ENCODE measurements at regions of chr2 and their contacts with region 1.

Region 1: DNA sequence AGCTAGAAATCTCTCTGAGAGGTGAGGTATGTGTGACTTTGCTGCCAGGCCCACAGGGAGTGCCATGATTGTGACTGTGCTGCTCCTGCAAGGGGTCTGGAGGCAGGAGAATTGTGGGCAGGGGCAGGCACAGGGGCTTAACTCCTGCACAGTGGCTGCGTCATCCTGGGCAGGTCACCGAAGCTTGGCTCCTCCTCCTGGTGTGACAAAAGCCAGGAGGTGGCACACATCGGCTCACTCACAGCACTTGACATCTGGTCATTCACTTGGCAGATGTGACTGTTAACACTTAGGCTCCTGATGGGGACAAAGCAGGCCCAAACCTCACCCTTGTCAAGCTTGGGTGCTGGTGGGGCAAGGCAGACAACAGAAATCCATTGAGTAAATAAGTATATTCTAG is 36.4 kb upstream of the GLI2 start:
- DNase-seq: no peak
- CTCF ChIP-seq: no peak

Region 2: DNA sequence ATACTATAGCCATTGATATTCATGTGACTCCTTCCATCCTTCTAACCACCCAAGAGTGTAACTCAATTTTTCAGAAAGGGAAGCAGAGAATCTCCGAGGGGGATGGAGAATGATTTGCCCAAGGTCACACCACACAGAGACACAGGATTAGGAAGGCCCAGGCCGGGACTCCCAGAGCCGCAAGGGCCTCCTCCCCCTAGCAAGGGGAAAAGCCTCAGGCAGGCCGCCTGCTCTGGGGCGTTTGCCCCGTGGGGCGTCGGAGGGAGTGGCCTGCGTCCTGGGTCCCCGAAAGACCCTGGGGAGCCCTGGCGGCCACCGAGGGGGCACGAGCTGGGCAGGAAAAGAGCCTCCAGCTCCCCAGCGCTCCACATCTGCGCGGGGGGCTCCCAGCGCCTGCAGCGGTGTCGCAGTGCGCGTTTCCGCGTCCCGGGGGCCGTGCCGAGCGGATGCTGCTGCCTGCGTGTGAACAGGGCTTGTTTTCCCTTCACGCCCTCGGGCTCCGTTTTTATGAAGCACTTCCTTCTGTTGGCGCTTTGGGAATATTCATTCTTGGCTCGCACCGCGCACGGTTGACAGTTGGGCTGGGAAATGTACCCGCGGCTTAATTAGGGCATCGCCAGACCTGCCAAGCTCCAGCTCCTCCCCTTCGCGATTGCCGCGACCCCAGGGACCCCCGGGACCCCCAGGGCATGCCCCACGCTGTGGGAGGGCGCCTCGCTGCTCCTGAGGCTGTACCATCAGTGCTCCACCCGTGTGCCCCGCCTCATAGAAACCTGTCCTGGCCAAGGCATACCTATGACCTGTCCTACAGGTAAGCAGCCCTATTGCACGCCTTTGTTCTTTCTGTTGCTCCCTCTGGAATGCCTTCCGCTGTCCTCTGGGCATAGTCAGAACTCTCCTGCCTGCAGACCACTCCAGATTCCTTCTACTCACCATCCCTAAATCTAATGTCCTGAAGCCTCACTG is 122.5 kb before region 1 on chr2:
- CTCF ChIA-PET with region 1: no interaction called
- POLR2A ChIA-PET with region 1: no interaction called
- DNase-seq: no peak
- CTCF ChIP-seq: no peak

Region 3: DNA sequence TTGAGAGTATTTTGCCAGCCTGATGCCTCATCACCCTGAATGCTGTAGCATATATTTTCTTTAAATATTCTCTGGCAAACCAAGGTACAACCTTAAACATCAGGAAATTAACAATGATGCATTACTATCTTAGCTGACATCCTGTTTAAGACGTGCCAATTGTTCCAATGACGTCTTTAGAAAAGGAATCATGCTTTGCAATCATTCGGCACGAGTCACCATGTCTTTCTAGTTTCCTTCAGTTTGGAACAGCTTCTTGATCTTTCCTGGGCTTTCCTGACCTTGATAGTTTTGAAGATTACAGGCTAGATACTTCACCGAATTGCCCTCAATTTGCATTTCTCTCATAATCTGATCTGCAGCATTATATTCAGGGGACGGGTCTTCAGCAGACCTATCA is 51.8 kb before region 1 on chr2:
- CTCF ChIA-PET with region 1: no interaction called
- POLR2A ChIA-PET with region 1: no interaction called
- DNase-seq: no peak
- CTCF ChIP-seq: no peak

Region 4: DNA sequence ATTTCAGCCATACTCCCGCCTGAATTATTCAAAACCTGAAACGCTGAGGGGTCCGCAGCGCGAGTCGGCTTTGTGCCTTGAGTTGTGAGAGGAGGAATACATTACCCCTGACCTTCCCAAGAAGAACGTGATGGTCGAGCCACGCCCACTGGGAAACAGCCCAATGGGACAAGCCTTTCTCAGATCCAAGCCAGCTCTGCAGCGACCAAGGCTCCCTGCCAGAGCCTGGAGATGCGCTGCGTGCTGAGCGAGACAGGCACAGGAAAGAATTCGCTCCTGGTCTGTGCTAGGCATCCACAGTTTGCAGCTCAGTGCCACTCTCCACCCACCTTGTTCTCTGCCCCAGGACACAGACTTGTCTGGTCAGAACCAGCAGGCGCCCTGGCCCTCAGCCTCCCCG is 37.7 kb before region 1 on chr2:
- CTCF ChIA-PET with region 1: no interaction called
- POLR2A ChIA-PET with region 1: no interaction called
- DNase-seq: no peak
- CTCF ChIP-seq: no peak

Region 5: DNA sequence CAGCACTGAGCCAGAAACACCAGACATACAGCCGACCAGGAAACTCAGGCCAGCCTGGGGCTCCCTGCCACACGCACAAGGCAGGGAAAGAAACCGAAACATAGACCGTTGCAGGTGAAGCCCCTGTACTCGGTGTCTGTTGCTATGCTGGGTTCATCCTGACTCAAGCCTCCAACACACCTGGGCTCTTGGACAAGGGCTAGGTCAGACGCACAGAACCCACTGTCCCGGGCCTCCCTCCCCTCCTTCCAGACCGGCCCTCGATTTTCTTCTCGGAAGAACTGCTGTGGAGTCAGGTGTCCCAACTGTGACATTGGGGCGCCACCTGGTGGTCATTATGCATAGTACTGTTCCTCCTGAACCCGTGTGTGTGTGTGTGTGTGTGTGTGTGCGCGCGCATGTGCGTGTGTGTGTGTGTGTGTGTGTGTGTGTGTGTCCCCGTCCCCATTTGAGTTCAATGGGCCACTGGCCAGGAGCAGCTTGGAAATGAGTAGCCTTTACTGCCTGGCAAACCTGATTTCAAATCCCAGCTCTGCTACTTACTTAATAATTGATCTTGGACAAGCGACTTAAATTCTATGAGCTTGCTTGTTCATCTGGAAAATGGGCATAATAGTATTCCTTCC is 19.0 kb before region 1 on chr2:
- CTCF ChIA-PET with region 1: interaction called, 12 read pairs
- POLR2A ChIA-PET with region 1: no interaction called
- DNase-seq: peak; percentile 74
- CTCF ChIP-seq: peak; percentile 76

Region 6: GRCh38 chr2:121071034-121071504 is 371.8 kb after region 1 on chr2:
- CTCF ChIA-PET with region 1: interaction called, 14 read pairs
- POLR2A ChIA-PET with region 1: no interaction called
- DNase-seq: peak; percentile 79
- CTCF ChIP-seq: peak; percentile 55

Region 7: GRCh38 chr2:121076885-121077549 is 377.7 kb after region 1 on chr2:
- CTCF ChIA-PET with region 1: interaction called, 22 read pairs
- POLR2A ChIA-PET with region 1: no interaction called
- DNase-seq: peak; percentile 81
- CTCF ChIP-seq: peak; percentile 96

Region 8: GRCh38 chr2:121085801-121086200 is 386.5 kb after region 1 on chr2:
- CTCF ChIA-PET with region 1: interaction called, 12 read pairs
- POLR2A ChIA-PET with region 1: no interaction called
- DNase-seq: no peak
- CTCF ChIP-seq: no peak

Measured in GM10248 (cell line).